Thyroid gland (tissue), 4 donors: ENCODE measurements at regions of chr3 and their contacts with region 1.

Region 1: DNA sequence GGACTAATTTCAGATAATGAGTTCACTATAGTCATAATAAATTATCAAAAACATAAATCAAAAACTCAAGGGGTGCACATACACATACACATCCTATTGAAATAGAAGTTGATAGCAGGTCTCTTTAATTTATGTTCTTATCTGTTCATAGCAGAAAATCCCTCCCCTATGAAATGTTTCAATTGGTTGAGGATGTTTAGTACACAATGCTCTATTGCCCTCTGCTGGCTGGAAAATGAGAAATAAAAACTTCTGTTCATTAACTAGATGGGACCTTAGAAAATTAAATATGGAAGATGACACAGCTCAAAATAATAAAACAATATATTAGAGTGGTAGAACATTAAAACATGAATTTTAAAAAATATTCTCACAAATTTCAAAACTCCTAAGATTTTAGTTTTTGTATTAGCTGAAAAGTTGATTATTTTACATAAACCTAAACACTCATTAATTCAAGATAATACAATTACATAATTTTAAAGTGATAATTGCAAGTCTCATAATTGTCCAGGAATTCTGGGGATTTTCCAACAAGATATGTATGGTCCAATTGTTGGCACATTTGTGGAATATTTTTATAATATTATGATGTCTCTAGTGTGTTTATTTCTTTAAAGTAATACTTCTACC is 735.0 kb downstream of the ROBO1 start:
- DNase-seq: no peak
- H3K4me3 ChIP-seq: no peak overlapping the region
- H3K27ac ChIP-seq: no peak overlapping the region
- H3K4me1 ChIP-seq: no peaks in the 10 kb centered on the region
- H3K27me3 ChIP-seq: no peaks in the 10 kb centered on the region
- CTCF ChIP-seq: peak; percentile 29 to 84 (median 52)
- POLR2A ChIP-seq: no peak

Region 2: DNA sequence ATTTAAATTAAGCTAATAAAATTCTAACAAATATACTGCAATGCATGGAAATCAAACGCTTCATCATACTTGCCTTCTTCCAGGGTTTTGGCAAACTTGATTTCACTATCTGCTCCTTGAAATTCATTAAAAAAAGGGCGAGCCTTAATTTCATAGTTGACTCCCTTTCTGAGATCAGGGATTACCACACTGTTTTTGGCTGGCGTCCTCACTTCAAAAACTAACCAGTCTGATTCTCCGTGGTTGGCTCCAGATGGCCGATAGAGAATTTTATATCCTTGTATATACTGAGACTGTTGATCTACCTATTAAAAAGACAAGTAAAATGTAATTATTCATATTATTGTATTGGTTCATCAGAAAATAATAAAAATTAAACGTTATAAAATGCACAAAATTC is 371.8 kb before region 1 on chr3:
- intact Hi-C with region 1: loop called (anchors 5 kb)
- DNase-seq: peak; percentile 25 to 52
- H3K4me3 ChIP-seq: no peak overlapping the region
- H3K27ac ChIP-seq: no peak overlapping the region
- H3K4me1 ChIP-seq: no peaks in the 10 kb centered on the region
- H3K27me3 ChIP-seq: no peaks in the 10 kb centered on the region
- CTCF ChIP-seq: no peak
- POLR2A ChIP-seq: no peak